Transverse colon (tissue), 4 donors: ENCODE measurements at regions of chr4 and their contacts with region 1.

Region 1: GRCh38 chr4:7442574-7443162 is 7.9 kb upstream of the PSAPL1 start:
- DNase-seq: no peak
- H3K4me3 ChIP-seq: no peak overlapping the region
- H3K27ac ChIP-seq: no peak overlapping the region
- H3K4me1 ChIP-seq: no peaks in the 10 kb centered on the region
- H3K27me3 ChIP-seq: no peaks in the 10 kb centered on the region
- CTCF ChIP-seq: no peak
- EP300 ChIP-seq: no peak
- POLR2A ChIP-seq: no peak

Region 2: GRCh38 chr4:7410446-7410845 is 32.2 kb before region 1 on chr4:
- in situ Hi-C with region 1: no loop called
- intact Hi-C with region 1: loop called (anchors 1 kb)
- DNase-seq: peak; percentile 4
- H3K4me3 ChIP-seq: no peak overlapping the region
- H3K27ac ChIP-seq: peak overlapping the region in 2 of 4 donors; percentile 47 to 49
- H3K4me1 ChIP-seq: peaks cover 0 to 4% (median 2%) of the 10 kb centered on the region in 4 donors
- H3K27me3 ChIP-seq: no peaks in the 10 kb centered on the region
- CTCF ChIP-seq: no peak
- EP300 ChIP-seq: no peak
- POLR2A ChIP-seq: no peak